ENCODE measurements at regions of chr17 and their contacts with region 1.

Region 1: GRCh38 chr17:73156166-73156840 is 8.5 kb upstream of the SSTR2 start:
- DNase-seq: no peak
- H3K4me3 ChIP-seq: no peak overlapping the region
- CTCF ChIP-seq: peak; percentile 80

Region 2: DNA sequence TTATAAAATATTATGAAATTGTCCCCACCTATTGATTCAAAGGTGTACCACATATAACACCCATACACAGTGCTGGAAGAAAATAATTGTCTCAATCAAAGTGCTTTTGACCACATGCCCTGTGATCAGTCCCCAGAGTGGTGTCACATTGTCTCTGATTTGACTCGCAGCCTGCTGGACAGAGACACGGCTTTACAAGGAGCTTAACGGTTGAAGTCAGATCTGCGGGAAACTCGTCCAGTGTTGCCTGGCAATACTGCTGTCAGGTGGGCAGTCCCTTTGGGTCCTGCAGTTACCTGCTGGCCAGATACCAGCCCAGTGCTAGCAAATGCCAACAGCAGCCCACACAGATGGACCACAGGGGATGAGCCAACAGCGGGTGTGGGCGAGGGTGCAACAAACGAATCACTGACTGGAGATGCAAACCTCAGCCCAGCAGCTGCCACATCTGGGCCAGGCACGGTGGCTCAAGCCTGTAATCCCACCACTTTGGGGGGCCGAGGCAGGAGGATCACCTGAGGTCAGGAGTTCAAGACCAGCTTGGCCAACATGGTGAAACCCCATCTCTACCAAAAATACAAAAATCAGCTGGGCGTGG is 17.7 kb before region 1 on chr17:
- CTCF ChIA-PET with region 1: interaction called, 22 read pairs
- POLR2A ChIA-PET with region 1: no interaction called
- DNase-seq: no peak
- H3K4me3 ChIP-seq: no peak overlapping the region
- CTCF ChIP-seq: no peak

Region 3: DNA sequence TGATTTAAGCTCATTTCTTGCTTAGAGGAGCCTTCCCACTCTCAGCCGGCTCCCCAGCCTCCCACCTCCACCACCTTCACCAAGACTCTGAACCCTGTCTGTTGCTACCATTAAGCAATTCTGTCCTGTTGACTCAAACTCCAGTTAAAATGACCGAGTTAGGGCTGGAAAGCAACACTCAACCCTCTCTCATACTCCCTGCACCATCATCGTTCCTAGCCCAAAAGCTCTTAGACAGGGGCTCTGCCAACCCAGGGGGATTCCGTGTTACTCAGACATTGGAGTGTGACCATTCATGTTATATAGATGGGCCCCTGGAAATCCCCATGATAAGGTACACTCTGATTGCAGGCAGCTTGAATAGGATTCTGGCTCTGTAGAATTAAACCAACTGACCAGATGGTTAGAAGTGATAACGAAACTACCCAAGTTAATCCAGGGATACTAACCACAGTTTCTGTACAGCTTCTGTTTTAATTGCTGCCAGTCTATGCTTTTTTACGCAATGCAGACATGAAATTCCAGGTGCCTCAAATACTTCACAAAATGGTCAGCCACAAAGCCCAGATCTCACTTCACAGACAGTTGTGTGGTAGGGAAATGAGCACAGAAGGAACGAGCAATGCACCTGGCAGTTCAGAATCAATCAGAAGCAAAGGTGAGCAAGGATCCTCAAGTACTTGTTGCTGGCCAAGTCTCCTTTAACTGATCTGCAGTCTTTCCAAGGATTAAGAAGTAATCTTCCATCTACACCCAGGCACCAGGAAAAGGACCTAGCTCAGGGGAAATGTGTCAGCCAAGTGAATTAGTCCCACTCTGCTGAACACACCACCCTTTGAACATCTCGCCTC is 10.7 kb after region 1 on chr17:
- CTCF ChIA-PET with region 1: interaction called, 20 read pairs
- POLR2A ChIA-PET with region 1: no interaction called
- DNase-seq: no peak
- H3K4me3 ChIP-seq: peak overlapping the region; percentile 54
- CTCF ChIP-seq: no peak

Measured in AG04449 (cell line).